ENCODE measurements at regions of chr14 and their contacts with region 1.

Region 1: DNA sequence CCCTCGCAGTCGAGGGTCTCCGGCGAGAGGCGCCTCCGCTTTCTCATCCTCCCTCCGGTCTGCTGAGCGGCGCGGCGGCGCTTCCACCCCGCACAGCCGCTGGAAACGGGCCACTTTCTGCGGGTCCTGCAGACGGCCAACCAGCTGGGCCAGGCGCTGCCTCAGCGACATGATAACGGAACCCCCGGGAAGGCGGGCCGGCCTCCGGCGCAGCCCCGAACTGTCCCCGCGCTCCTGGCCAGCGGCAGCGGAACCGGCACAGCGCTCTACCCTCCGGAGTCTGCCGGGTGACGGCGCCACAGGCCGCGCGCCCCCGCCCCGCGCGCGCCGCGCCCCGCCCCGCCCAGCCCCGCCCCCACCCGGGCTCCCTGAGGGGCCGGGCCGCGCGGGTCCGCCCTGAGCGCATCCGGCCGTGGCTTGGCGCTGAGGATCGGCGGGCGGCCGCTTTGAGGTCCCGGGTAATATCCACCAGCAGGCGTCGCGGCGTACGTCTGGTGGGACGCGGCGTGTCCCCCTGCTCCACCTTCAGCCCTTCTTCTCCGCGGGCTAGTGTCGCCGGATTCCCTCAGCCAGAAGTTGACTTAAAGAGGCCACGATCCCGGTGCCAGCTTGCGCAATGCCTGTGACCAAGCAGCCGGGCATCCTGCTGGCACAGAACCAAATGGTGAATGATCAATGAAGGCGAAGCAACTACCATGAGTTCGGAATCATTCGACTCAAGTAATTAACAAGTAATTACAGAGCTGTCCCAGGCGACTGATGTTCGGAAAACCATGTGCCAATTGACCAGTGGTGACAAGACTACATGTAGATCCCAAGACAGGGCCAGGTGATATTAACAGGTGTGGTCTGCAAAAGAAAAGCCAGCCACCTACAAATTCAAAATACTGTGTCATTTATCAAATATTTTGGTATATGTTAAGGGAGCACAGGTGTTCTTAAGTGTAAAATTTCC is at the start of gene SGPP1:
- DNase-seq: no peak
- ATAC-seq: peak; percentile 84
- H3K4me3 ChIP-seq: peak within 1 kb of the TSS; percentile 91
- H3K27ac ChIP-seq: peak within 1 kb of the TSS; percentile 60
- H3K4me1 ChIP-seq: peaks cover 3% of the 10 kb centered on the region; the same call in 1 of the 2 replicates
- H3K27me3 ChIP-seq: no peaks in the 10 kb centered on the region
- CTCF ChIP-seq: peak; percentile 39 to 59 (median 49); a peak in 5 of 6 replicates
- EP300 ChIP-seq: peak in 1 of 2 experiments; percentile 12; a peak in 1 of 4 replicates
- POLR2A ChIP-seq: peak; percentile 92
- RAD21 ChIP-seq: peak; percentile 49
- polyA plus RNA-seq, gene SGPP1: 8.8 to 17.1 TPM

Region 2: GRCh38 chr14:63603749-63604277 is 124.2 kb before region 1 on chr14:
- CTCF ChIA-PET with region 1: no interaction called
- POLR2A ChIA-PET with region 1: no interaction called
- RAD21 ChIA-PET with region 1: no interaction called
- SMC1A ChIA-PET with region 1: no interaction called
- in situ Hi-C with region 1: no loop called
- intact Hi-C with region 1: no loop called
- DNase-seq: no peak
- ATAC-seq: no peak
- H3K4me3 ChIP-seq: no peak overlapping the region
- H3K27ac ChIP-seq: no peak overlapping the region
- H3K4me1 ChIP-seq: no peaks in the 10 kb centered on the region
- H3K27me3 ChIP-seq: no peaks in the 10 kb centered on the region
- CTCF ChIP-seq: no peak
- EP300 ChIP-seq: no peak
- POLR2A ChIP-seq: no peak
- RAD21 ChIP-seq: no peak

Region 3: DNA sequence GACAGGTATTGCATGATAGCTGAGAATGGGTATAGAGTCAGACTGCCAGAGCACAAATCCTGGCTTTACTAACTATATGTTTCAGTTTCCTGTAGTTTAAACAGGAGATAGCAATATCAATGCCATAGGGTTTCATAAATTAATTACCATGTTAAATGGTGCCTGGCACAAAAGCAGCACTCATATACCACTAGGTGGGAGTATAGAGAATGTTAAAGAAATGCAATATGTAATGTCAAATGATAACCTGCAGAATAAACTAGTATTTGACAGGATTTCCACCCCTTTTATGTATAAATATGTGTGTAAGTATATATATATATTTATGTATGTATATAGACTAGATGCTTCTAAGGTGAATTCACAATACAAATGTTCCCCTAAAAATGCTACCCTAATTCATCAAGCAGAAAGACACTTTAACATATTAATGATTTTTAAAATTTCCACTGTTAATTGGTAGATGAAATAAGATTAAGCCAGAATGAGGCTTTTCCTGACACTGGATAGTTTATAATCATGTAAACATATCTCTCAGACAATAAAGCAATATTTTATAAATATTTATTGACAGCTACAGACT is 95.0 kb before region 1 on chr14:
- CTCF ChIA-PET with region 1: interaction called, 21 read pairs
- POLR2A ChIA-PET with region 1: interaction called, 3 read pairs
- RAD21 ChIA-PET with region 1: interaction called, 13 read pairs
- SMC1A ChIA-PET with region 1: interaction called, 99 read pairs
- in situ Hi-C with region 1: no loop called
- intact Hi-C with region 1: no loop called
- DNase-seq: no peak
- ATAC-seq: peak; percentile 94
- H3K4me3 ChIP-seq: no peak overlapping the region
- H3K27ac ChIP-seq: no peak overlapping the region
- H3K4me1 ChIP-seq: no peaks in the 10 kb centered on the region
- H3K27me3 ChIP-seq: no peaks in the 10 kb centered on the region
- CTCF ChIP-seq: peak; percentile 48 to 60 (median 48); a peak in 5 of 6 replicates
- EP300 ChIP-seq: no peak
- POLR2A ChIP-seq: no peak
- RAD21 ChIP-seq: peak; percentile 60

Region 4: GRCh38 chr14:63713765-63714164 is 14.3 kb before region 1 on chr14:
- CTCF ChIA-PET with region 1: interaction called, 23 read pairs
- POLR2A ChIA-PET with region 1: interaction called, 81 read pairs
- RAD21 ChIA-PET with region 1: interaction called, 7 read pairs
- SMC1A ChIA-PET with region 1: interaction called, 74 read pairs
- in situ Hi-C with region 1: no loop called
- intact Hi-C with region 1: no loop called
- DNase-seq: no peak
- ATAC-seq: no peak; the same call in 2 of the 3 replicates
- H3K4me3 ChIP-seq: no peak overlapping the region
- H3K27ac ChIP-seq: no peak overlapping the region
- H3K4me1 ChIP-seq: peaks cover 16% of the 10 kb centered on the region
- H3K27me3 ChIP-seq: no peaks in the 10 kb centered on the region
- CTCF ChIP-seq: no peak
- EP300 ChIP-seq: no peak
- POLR2A ChIP-seq: no peak
- RAD21 ChIP-seq: no peak

Region 5: GRCh38 chr14:63770187-63770807 is 42.2 kb after region 1 on chr14:
- CTCF ChIA-PET with region 1: interaction called, 76 read pairs
- POLR2A ChIA-PET with region 1: interaction called, 4 read pairs
- RAD21 ChIA-PET with region 1: interaction called, 46 read pairs
- SMC1A ChIA-PET with region 1: interaction called, 66 read pairs
- in situ Hi-C with region 1: no loop called
- intact Hi-C with region 1: loop called (anchors 1 kb)
- DNase-seq: no peak
- ATAC-seq: peak; percentile 94
- H3K4me3 ChIP-seq: no peak overlapping the region
- H3K27ac ChIP-seq: no peak overlapping the region
- H3K4me1 ChIP-seq: peaks cover 9% of the 10 kb centered on the region
- H3K27me3 ChIP-seq: no peaks in the 10 kb centered on the region
- CTCF ChIP-seq: peak; percentile 62 to 76 (median 67)
- EP300 ChIP-seq: no peak
- POLR2A ChIP-seq: no peak
- RAD21 ChIP-seq: peak; percentile 87